IMR-90 (cell line): ENCODE measurements at regions of chr9 and their contacts with region 1.

Region 1: DNA sequence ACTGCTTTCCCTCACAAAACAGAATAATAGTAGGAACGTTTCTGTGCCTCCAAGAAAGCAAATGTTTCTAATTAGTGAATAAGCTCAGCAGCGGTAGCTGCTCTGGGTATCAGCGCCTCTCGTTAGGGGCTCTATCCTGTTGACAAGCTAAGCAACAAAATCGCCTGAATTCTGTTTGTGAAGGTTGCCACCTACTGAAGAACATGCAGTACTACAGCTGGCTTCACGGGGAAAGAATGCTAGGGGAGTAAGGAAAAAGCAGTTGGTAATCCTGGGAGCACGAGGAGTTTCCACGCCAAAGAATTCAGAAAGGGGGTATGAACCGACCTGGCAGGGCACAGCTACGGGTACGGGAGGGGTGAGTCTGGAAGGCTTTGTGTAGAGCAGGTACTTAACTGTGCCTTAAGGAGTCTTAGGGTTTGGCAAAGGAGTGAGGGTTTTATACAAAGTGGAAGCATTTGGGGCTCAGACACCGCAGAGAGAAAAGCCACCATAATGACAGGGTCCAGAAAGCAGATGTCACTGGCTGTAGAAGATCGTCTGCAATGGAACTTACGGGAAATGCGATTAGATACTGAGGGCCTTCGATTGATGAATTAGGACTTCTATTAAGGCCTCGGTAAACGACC is 171.7 kb downstream of the TTC39B start:
- DNase-seq: peak; percentile 69
- ATAC-seq: peak; percentile 99
- H3K4me3 ChIP-seq: no peak overlapping the region
- H3K27ac ChIP-seq: no peak overlapping the region
- H3K4me1 ChIP-seq: no peaks in the 10 kb centered on the region
- H3K27me3 ChIP-seq: no peaks in the 10 kb centered on the region; the same call in none of the 2 replicates
- CTCF ChIP-seq: peak; percentile 79
- POLR2A ChIP-seq: no peak
- RAD21 ChIP-seq: peak; percentile 66

Region 2: DNA sequence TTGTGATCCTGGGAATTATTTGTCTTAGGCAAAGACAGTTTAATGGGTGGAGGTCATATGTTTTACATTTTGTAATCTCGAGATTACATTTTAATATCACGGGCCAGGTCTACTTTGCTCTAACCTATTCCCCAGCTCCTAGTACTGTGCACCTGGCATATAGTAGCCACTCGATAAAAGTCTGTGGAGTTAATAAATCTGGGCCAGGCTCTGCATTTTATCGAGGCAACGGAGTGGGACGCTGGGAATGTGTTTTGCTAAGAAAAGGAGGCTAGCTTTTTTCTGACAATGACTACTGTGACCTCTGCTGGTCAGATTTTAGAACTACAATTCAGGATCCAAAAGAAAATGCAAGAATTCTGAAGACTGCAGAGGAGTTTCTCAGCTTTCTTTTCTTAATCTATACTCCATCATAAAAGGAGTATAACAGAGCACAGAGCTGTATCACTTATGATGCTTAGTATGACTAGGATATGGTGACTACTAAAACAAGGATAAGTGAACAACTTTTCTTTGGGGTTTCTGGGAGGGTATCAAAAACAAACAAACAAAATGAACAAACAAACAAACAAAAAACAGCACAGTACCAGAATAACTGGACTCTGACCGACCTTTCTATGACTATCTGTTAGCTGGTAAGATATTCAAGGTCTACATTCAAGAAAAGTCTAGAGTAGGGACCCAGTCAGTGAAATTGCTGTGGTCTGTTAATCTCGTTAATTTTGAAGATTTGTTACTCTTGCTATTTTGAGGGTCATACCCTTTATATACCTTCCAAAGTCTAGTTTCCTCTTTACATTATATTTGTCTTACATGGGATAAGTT is 366.7 kb before region 1 on chr9:
- CTCF ChIA-PET with region 1: no interaction called
- POLR2A ChIA-PET with region 1: no interaction called
- dilution Hi-C with region 1: no loop called
- in situ Hi-C with region 1: no loop called
- intact Hi-C with region 1: loop called (anchors 10 kb)
- DNase-seq: peak; percentile 51
- ATAC-seq: peak; percentile 75
- H3K4me3 ChIP-seq: no peak overlapping the region
- H3K27ac ChIP-seq: no peak overlapping the region
- H3K4me1 ChIP-seq: no peaks in the 10 kb centered on the region
- H3K27me3 ChIP-seq: no peaks in the 10 kb centered on the region
- CTCF ChIP-seq: peak; percentile 72
- POLR2A ChIP-seq: no peak
- RAD21 ChIP-seq: peak; percentile 73

Region 3: DNA sequence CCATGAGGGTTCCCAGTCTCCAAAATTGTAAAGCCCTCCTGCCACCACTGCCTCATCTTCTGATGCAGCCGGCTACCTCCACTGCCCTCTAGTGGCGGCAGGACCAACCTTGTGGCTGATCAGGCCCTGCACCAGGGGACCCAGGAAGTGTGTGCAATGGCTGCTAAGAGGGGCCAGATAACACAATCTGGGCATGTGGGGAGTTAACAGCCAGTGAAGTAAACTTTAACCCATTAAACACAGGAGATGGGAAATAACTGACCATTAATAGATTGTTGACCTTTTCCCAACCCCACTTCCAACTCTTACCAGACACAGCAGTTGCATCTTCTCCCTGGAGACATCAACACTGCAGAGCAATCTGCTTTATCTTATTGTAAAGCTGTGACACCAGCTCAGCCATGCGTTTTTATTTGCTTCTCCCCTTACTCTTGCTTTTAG is 288.4 kb before region 1 on chr9:
- CTCF ChIA-PET with region 1: no interaction called
- POLR2A ChIA-PET with region 1: no interaction called
- dilution Hi-C with region 1: no loop called
- in situ Hi-C with region 1: loop called (anchors 25 kb)
- intact Hi-C with region 1: loop called (anchors 1 kb)
- DNase-seq: peak; percentile 17
- ATAC-seq: peak; percentile 63; the same call in 1 of the 2 replicates
- H3K4me3 ChIP-seq: no peak overlapping the region
- H3K27ac ChIP-seq: no peak overlapping the region
- H3K4me1 ChIP-seq: no peaks in the 10 kb centered on the region
- H3K27me3 ChIP-seq: no peaks in the 10 kb centered on the region; the same call in 1 of the 2 replicates
- CTCF ChIP-seq: peak; percentile 46
- POLR2A ChIP-seq: no peak
- RAD21 ChIP-seq: peak; percentile 11; the same call in 1 of the 2 replicates

Region 4: DNA sequence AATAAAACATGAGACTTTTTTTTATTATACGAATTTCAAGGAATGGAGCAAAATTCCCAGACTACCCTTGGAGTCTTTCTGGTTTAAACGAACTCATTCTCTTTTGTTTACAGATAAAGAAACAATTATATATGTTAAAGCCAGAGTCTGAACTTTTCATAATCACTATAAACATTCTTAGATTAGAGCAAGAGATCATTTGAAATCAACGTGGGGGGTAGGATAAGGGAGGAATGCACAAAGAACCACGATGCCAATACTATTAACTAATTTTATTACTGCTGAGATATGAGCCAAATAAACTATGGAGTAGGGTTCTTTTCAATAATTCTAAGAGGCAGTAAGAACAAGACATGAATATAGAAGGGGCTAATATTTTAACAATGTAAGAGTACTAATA is 77.0 kb before region 1 on chr9:
- CTCF ChIA-PET with region 1: no interaction called
- POLR2A ChIA-PET with region 1: no interaction called
- dilution Hi-C with region 1: no loop called
- in situ Hi-C with region 1: no loop called
- intact Hi-C with region 1: loop called (anchors 1 kb)
- DNase-seq: no peak
- ATAC-seq: no peak
- H3K4me3 ChIP-seq: no peak overlapping the region
- H3K27ac ChIP-seq: no peak overlapping the region
- H3K4me1 ChIP-seq: no peaks in the 10 kb centered on the region
- H3K27me3 ChIP-seq: no peaks in the 10 kb centered on the region
- CTCF ChIP-seq: no peak
- POLR2A ChIP-seq: no peak
- RAD21 ChIP-seq: no peak

Region 5: DNA sequence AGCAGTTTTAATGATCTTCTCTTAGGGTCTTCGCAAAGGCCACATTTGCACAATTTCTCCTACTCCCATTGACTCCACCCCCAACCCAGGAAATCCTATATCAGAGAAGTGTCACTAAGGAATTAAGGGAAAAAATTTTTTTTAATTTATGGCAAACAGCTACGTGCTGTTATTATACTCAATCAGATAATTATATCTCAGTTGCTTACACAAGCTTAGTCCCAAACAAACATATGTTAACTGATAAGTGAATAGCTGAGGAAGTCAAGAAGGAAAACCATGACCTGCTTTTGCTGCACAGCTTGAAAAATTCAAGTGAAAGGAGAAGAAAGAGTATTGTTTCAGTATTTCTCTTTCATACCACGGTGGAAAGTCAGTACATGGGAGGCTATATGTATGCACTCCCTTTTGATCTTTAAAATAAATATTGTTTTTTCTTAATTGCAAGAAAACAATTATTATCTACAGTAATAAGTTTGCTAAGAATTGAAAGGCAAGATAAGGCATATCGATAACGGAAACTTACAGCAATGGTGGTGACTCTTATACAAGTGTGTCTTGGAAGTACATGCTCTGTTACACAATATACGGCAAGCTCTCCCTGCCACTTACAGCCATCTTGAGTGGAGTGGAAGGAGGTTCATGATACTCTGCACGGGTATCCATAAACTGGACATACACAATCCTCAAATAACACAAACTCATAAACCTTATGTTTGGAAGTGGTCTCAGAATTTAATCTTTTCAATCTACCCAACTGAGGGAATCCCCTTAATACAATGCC is 57.1 kb before region 1 on chr9:
- CTCF ChIA-PET with region 1: no interaction called
- POLR2A ChIA-PET with region 1: no interaction called
- dilution Hi-C with region 1: no loop called
- in situ Hi-C with region 1: loop called (anchors 10 kb)
- intact Hi-C with region 1: no loop called
- DNase-seq: no peak
- ATAC-seq: no peak
- H3K4me3 ChIP-seq: no peak overlapping the region
- H3K27ac ChIP-seq: no peak overlapping the region
- H3K4me1 ChIP-seq: no peaks in the 10 kb centered on the region
- H3K27me3 ChIP-seq: no peaks in the 10 kb centered on the region
- CTCF ChIP-seq: no peak
- POLR2A ChIP-seq: no peak
- RAD21 ChIP-seq: no peak

Region 6: DNA sequence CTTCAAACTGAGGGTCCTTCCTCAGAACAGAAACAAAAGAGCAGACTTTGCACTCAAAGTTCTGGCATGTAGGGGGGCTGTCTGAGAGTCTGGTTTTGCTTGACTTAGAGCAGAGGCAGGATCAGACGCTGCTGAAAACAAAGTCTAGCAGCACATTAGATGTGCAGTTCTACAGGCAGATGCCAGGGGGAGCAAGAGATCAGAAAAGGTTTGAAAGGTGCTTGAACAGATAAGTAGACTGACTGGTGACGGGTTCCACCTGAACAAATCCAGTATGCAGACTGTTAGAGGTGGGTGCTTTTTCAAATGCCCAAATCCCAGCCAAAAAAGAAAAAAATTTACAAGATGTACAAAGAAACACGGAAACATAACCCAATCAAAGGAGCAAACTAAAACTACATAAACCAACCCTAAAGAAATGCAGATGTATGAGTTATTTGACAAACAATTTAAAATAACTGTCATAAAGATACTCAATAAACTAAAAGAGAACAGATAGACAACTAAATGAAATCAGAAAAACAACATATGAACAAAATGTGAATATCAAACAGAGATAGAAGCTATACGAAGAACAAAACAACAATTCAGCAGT is 30.4 kb before region 1 on chr9:
- CTCF ChIA-PET with region 1: interaction called, 10 read pairs
- POLR2A ChIA-PET with region 1: no interaction called
- dilution Hi-C with region 1: no loop called
- in situ Hi-C with region 1: loop called (anchors 5 kb)
- intact Hi-C with region 1: loop called (anchors 1 kb)
- DNase-seq: peak; percentile 46
- ATAC-seq: peak; percentile 85
- H3K4me3 ChIP-seq: no peak overlapping the region
- H3K27ac ChIP-seq: no peak overlapping the region
- H3K4me1 ChIP-seq: peaks cover 2% of the 10 kb centered on the region; the same call in 1 of the 2 replicates
- H3K27me3 ChIP-seq: no peaks in the 10 kb centered on the region; the same call in 1 of the 2 replicates
- CTCF ChIP-seq: peak; percentile 70
- POLR2A ChIP-seq: no peak
- RAD21 ChIP-seq: peak; percentile 66

Region 7: DNA sequence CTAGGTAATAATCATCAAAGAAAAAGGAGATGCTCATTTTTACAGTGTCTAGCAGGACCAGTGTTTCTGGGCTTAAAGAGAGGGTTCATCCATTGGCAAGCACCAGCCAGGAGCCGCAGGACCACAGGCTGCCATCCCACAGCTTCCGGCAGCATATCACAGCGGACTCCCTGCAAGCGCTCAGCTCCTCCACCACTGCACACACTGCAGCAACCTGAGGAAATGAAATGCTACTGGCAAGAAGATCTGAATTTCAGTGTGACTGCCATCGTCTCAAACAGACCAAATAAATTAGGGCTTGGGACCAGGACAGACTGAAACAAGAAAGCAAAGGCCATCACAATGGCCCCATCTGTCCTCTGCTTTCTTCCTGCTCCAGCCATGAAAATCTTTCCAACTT is 57.6 kb after region 1 on chr9:
- CTCF ChIA-PET with region 1: no interaction called
- POLR2A ChIA-PET with region 1: no interaction called
- dilution Hi-C with region 1: no loop called
- in situ Hi-C with region 1: no loop called
- intact Hi-C with region 1: no loop called
- DNase-seq: no peak
- ATAC-seq: no peak
- H3K4me3 ChIP-seq: no peak overlapping the region
- H3K27ac ChIP-seq: no peak overlapping the region
- H3K4me1 ChIP-seq: no peaks in the 10 kb centered on the region
- H3K27me3 ChIP-seq: no peaks in the 10 kb centered on the region
- CTCF ChIP-seq: no peak
- POLR2A ChIP-seq: no peak
- RAD21 ChIP-seq: no peak